Mammary epithelial cell (primary cell): ENCODE measurements at regions of chr17 and their contacts with region 1.

Region 1: DNA sequence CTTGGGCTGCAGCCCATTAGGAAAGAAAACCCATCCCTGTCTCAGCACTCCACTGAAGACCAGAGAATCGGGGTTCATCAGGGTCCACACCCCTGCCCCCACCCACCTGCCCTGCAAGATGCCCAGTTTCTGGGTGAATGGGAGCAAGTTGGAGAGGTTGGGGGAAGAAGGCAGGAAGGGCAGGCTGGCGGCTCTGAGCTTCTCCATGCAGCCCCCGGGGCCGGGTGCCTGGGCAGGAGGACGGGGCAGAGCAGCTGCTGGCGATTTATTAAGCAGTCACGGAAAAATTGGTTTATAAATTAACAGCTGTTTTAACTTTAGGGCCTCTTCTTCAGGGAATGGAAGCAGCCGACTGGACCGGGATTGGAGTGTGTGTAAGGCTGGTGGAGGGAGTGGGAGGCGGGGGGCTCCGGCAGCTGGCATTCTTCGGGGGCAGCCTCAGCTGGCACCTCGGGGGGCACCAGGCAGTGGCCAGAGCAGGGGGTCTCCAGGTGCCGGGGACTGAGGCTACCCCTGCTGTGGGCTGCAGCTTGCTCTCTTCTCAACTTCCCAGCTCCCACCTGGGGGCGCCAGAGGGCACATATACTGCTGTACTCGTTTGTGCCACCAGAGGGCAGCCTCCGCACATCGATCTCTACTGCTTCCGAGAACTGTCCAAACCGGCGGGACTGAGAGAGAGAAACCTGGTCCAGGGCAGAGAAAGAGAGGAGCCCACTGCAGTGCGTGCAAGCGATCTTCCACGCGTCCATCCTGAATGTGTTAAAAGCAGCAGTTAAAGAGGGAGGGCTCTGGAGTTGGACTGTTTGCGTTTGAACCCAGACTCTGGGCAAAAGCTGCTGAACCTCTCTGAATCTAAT is 5.0 kb upstream of the PPP1R1B start:
- DNase-seq: peak; percentile 66
- H3K4me3 ChIP-seq: no peak overlapping the region
- H3K27ac ChIP-seq: no peak overlapping the region
- H3K4me1 ChIP-seq: peaks cover 18% of the 10 kb centered on the region
- H3K27me3 ChIP-seq: peaks cover 2% of the 10 kb centered on the region
- CTCF ChIP-seq: peak; percentile 100

Region 2: GRCh38 chr17:39527220-39527813 is 94.4 kb before region 1 on chr17:
- CTCF ChIA-PET with region 1: no interaction called
- dilution Hi-C with region 1: no loop called
- in situ Hi-C with region 1: no loop called
- intact Hi-C with region 1: loop called (anchors 1 kb)
- DNase-seq: peak; percentile 12
- H3K4me3 ChIP-seq: no peak overlapping the region
- H3K27ac ChIP-seq: no peak overlapping the region
- H3K4me1 ChIP-seq: no peaks in the 10 kb centered on the region
- H3K27me3 ChIP-seq: no peaks in the 10 kb centered on the region
- CTCF ChIP-seq: peak; percentile 54 to 61

Region 3: GRCh38 chr17:39563476-39563875 is 58.3 kb before region 1 on chr17:
- CTCF ChIA-PET with region 1: no interaction called
- dilution Hi-C with region 1: no loop called
- in situ Hi-C with region 1: no loop called
- intact Hi-C with region 1: no loop called
- DNase-seq: no peak
- H3K4me3 ChIP-seq: no peak overlapping the region
- H3K27ac ChIP-seq: no peak overlapping the region
- H3K4me1 ChIP-seq: no peaks in the 10 kb centered on the region
- H3K27me3 ChIP-seq: no peaks in the 10 kb centered on the region
- CTCF ChIP-seq: no peak

Region 4: GRCh38 chr17:39573447-39574298 is 48.1 kb before region 1 on chr17:
- CTCF ChIA-PET with region 1: interaction called, 3 read pairs
- dilution Hi-C with region 1: no loop called
- in situ Hi-C with region 1: no loop called
- intact Hi-C with region 1: loop called (anchors 1 kb)
- DNase-seq: peak; percentile 67
- H3K4me3 ChIP-seq: peak overlapping the region; percentile 52 to 61 (median 57)
- H3K27ac ChIP-seq: peak overlapping the region; percentile 48
- H3K4me1 ChIP-seq: peaks cover 4% of the 10 kb centered on the region
- H3K27me3 ChIP-seq: no peaks in the 10 kb centered on the region
- CTCF ChIP-seq: no peak

Region 5: DNA sequence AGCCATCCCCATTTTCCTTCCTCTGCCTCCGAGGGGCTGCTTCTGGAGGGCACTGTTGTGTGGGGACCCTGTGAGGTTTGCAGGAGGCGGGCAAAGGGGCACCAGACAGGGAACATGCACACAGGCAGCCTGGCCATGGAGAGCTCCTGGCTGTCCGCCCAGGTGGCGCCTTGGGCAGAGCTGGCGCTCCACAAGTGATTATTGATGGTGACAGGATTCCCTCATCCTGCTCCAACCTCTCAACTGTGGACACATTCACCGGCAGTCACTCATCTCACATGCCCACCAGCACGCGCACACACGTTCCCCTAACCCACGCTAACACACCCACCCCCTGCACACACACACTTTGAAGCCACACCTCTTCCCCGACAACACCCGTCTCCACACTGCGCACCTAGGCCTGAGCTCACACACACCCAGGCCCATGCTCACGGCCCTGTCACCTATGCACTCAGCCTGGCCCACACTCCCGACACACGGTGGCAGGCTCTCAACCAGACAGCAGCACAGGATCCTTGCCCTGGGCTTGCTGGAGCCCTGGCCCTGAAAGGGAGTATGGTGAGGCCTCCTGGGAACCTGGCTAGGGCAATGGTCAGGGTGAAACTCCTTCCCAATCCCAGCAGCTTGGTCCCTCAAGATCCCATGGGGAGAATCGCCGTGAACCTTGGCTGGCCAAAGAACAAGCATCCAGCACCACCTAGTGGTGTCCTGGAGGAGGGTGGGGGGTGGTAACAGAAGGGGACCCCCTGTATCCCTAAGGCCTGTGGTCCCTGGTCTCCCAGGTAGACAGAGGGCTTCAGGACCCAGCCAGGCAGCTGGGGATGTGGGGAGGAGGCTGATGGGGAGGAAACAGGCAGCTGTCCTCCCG is 50.1 kb after region 1 on chr17:
- CTCF ChIA-PET with region 1: no interaction called
- dilution Hi-C with region 1: loop called (anchors 10 kb)
- in situ Hi-C with region 1: no loop called
- intact Hi-C with region 1: no loop called
- DNase-seq: peak; percentile 15
- H3K4me3 ChIP-seq: no peak overlapping the region
- H3K27ac ChIP-seq: no peak overlapping the region
- H3K4me1 ChIP-seq: peaks cover 8% of the 10 kb centered on the region
- H3K27me3 ChIP-seq: no peaks in the 10 kb centered on the region
- CTCF ChIP-seq: peak; percentile 22 to 56

Region 6: DNA sequence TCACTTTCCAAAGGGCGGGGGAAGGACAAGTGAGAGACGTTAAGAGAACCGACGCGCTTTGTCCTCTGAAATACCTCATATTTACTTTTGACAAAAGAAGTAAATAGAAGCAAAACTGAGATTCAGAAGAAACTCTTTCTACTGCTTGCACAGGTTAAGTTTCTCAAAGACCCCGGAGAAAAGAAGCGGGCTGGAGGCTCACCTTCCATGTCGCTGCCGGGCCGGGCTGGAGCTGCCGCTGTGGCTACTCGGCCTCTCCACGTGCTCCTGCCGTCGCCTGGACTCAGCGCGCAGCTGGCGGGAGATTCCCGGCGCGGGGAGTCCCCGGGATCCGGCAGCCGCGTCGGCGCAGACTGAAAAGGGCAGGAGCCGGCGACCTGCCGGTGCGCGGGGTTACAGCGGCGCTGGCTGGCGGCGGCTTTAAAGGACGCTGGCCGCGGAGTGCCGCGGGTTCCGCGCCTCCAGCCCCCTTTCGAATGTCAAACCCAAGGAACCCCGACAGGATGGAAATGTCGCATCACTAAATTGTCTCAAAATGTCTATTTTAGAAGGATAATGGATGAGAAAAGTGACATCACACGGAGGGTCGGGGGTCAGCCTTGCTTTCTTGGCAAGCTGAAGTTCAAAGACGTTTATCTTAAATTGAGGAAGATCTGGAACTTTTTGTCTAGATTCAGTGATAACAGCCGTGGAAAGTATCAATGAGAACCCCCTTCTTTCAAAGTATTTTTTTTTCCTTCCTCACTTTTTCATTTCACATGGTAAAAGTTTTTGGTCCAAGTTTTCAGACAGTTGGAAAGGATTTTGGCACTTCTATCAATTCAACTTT is 242.4 kb after region 1 on chr17 and contains the start of gene IKZF3:
- CTCF ChIA-PET with region 1: no interaction called
- dilution Hi-C with region 1: no loop called
- in situ Hi-C with region 1: loop called in 1 of 2 experiments (anchors 10 kb)
- intact Hi-C with region 1: loop called (anchors 1 kb)
- DNase-seq: peak; percentile 68
- H3K4me3 ChIP-seq: no peak within 1 kb of the TSS
- H3K27ac ChIP-seq: no peak within 1 kb of the TSS
- H3K4me1 ChIP-seq: peaks cover 6% of the 10 kb centered on the region
- H3K27me3 ChIP-seq: peaks cover 47% of the 10 kb centered on the region
- CTCF ChIP-seq: peak in 1 of 2 donors; percentile 43
- total RNA-seq, gene IKZF3: 0.02 TPM in 1 of 2 donors, not detected in the other